ENCODE measurements at regions of chr4 and their contacts with region 1.

Region 1: DNA sequence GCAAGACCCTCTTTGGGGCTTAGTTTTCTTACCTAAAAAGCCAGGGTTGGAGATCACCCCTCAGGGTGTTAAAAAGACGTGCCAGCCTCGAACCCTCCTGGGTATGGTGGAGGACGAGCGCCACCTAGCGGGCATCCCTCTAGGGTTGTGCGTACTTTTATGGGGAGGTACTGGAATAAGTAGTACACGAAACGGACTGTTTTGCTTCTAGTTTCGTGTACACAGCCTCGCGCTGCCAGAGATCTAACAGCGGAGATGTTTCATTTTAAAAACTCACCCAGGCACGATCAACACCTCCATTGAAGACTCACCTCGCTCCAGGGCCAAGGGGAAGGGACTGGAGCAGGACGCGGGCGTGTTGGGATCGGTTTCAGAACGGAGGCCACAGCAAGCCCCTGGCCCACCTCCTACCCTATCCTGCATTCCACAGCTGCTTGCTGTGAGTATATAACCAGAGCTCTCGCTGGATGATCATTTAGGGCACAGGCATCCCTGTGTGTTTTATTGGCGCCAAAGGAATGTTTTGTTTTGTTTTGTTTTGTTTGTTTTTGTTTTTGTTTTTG is 4.8 kb upstream of the NKX3-2 start:
- DNase-seq: peak; percentile 72
- ATAC-seq: peak; percentile 90
- H3K4me3 ChIP-seq: peak overlapping the region; percentile 75
- H3K27ac ChIP-seq: no peak overlapping the region
- H3K4me1 ChIP-seq: peaks cover 3% of the 10 kb centered on the region; the same call in 1 of the 2 replicates
- H3K27me3 ChIP-seq: peaks cover 12 to 14% of the 10 kb centered on the region in 2 experiments
- CTCF ChIP-seq: peak; percentile 78 to 94 (median 82)
- EP300 ChIP-seq: no peak
- POLR2A ChIP-seq: no peak
- RAD21 ChIP-seq: peak; percentile 96

Region 2: GRCh38 chr4:11765849-11766453 is 1783.1 kb before region 1 on chr4:
- CTCF ChIA-PET with region 1: no interaction called
- POLR2A ChIA-PET with region 1: no interaction called
- RAD21 ChIA-PET with region 1: no interaction called
- SMC1A ChIA-PET with region 1: no interaction called
- in situ Hi-C with region 1: loop called (anchors 25 kb)
- intact Hi-C with region 1: no loop called
- DNase-seq: no peak
- ATAC-seq: peak; percentile 76
- H3K4me3 ChIP-seq: no peak overlapping the region
- H3K27ac ChIP-seq: no peak overlapping the region
- H3K4me1 ChIP-seq: no peaks in the 10 kb centered on the region
- H3K27me3 ChIP-seq: no peaks in the 10 kb centered on the region
- CTCF ChIP-seq: peak; percentile 54 to 70 (median 65)
- EP300 ChIP-seq: no peak
- POLR2A ChIP-seq: no peak
- RAD21 ChIP-seq: peak; percentile 40; the same call in 1 of the 2 replicates

Region 3: GRCh38 chr4:12729384-12729783 is 819.7 kb before region 1 on chr4:
- CTCF ChIA-PET with region 1: interaction called, 3 read pairs
- POLR2A ChIA-PET with region 1: no interaction called
- RAD21 ChIA-PET with region 1: interaction called, 3 read pairs
- SMC1A ChIA-PET with region 1: no interaction called
- in situ Hi-C with region 1: loop called (anchors 5 kb)
- intact Hi-C with region 1: loop called (anchors 1 kb)
- DNase-seq: no peak
- ATAC-seq: peak; percentile 48; the same call in 2 of the 3 replicates
- H3K4me3 ChIP-seq: no peak overlapping the region
- H3K27ac ChIP-seq: no peak overlapping the region
- H3K4me1 ChIP-seq: no peaks in the 10 kb centered on the region
- H3K27me3 ChIP-seq: no peaks in the 10 kb centered on the region
- CTCF ChIP-seq: peak in 2 of 3 experiments; percentile 29 to 35; a peak in 3 of 6 replicates
- EP300 ChIP-seq: no peak
- POLR2A ChIP-seq: no peak
- RAD21 ChIP-seq: peak; percentile 74

Region 4: GRCh38 chr4:12852338-12853307 is 696.4 kb before region 1 on chr4:
- CTCF ChIA-PET with region 1: interaction called, 34 read pairs
- POLR2A ChIA-PET with region 1: no interaction called
- RAD21 ChIA-PET with region 1: interaction called, 5 read pairs
- SMC1A ChIA-PET with region 1: interaction called, 20 read pairs
- in situ Hi-C with region 1: loop called (anchors 5 kb)
- intact Hi-C with region 1: loop called (anchors 1 kb)
- DNase-seq: no peak
- ATAC-seq: peak; percentile 84
- H3K4me3 ChIP-seq: no peak overlapping the region
- H3K27ac ChIP-seq: no peak overlapping the region
- H3K4me1 ChIP-seq: no peaks in the 10 kb centered on the region
- H3K27me3 ChIP-seq: no peaks in the 10 kb centered on the region
- CTCF ChIP-seq: peak; percentile 32 to 62 (median 48); a peak in 5 of 6 replicates
- EP300 ChIP-seq: no peak
- POLR2A ChIP-seq: no peak
- RAD21 ChIP-seq: peak; percentile 65

Region 5: DNA sequence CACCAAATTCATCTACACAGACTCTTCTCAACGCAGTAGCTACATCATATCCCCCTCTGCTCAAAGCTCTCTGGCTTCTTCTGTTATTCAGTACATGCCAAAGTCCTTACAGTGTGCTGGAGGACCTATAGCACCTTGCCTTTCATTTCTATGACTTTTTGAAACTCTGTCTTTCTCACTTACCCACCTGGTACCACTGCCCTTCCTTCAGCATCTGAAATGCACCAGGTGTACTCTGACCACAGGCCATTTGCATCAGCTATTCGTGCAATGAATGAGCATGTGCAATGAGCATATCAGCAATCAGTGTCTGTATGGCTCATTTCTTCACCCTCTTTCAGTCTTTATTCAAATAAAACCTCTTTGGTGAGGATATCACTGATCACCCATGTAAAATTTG is 464.9 kb before region 1 on chr4:
- CTCF ChIA-PET with region 1: no interaction called
- POLR2A ChIA-PET with region 1: no interaction called
- RAD21 ChIA-PET with region 1: no interaction called
- SMC1A ChIA-PET with region 1: no interaction called
- in situ Hi-C with region 1: no loop called
- intact Hi-C with region 1: loop called (anchors 10 kb)
- DNase-seq: no peak
- ATAC-seq: no peak
- H3K4me3 ChIP-seq: no peak overlapping the region
- H3K27ac ChIP-seq: no peak overlapping the region
- H3K4me1 ChIP-seq: no peaks in the 10 kb centered on the region
- H3K27me3 ChIP-seq: no peaks in the 10 kb centered on the region
- CTCF ChIP-seq: no peak
- EP300 ChIP-seq: no peak
- POLR2A ChIP-seq: no peak
- RAD21 ChIP-seq: no peak

Measured in GM12878 (cell line).